ENCODE measurements at regions of chr1 and their contacts with region 1.

Region 1: DNA sequence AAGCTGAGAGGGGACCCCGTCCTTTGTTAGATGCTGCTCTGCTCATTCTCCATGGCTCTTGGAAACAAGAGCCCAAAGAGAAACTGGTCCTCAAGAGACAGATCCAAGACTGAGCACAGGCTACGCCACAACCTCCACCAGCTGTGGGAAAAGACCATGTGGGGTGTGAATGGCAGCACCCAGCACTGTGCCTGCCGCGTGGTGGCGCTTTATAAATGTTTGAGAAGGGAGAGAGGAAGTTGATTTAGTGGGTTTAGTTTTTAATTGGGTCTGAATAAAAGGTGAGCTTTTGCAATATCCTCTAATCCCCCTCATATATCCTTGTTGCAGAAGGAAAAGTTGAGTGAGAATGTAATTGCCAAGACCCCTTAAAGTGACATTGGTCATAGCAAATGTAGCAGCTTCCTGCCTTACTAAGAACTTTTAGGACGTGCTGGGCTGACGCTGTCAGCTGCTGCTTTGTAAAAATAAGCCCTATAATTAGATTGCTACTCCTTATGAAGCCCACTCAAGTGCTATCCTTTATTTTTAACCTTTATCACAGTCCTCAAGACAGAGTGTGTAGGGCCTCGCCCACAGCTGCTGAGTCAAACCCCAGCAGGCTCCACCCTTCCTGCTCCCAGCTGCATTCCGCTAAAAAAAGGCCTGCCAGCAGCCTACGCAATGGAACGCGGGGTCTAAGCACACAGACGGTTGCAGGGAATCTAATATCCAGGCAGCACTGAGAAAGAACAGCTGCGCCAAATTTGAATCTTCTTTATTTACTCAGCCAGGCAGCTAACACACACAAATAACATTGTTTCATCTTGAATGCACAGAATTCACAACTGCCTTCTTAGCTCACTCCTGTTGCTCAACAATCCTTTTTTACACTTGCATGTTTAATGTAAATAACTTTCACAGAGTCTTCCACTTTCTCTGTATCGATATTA is 47.4 kb upstream of the PRDX6 start:
- DNase-seq: peak; percentile 96
- ATAC-seq: peak; percentile 97
- H3K4me3 ChIP-seq: peak overlapping the region; percentile 21; the same call in 1 of the 2 replicates
- H3K27ac ChIP-seq: peak overlapping the region; percentile 74
- H3K4me1 ChIP-seq: peaks cover 5% of the 10 kb centered on the region; the same call in 1 of the 2 replicates
- H3K27me3 ChIP-seq: no peaks in the 10 kb centered on the region
- CTCF ChIP-seq: peak; percentile 58
- POLR2A ChIP-seq: no peak
- RAD21 ChIP-seq: peak; percentile 44

Region 2: GRCh38 chr1:173302890-173303829 is 126.6 kb before region 1 on chr1:
- CTCF ChIA-PET with region 1: no interaction called
- POLR2A ChIA-PET with region 1: no interaction called
- dilution Hi-C with region 1: no loop called
- in situ Hi-C with region 1: no loop called
- intact Hi-C with region 1: no loop called
- DNase-seq: no peak
- ATAC-seq: no peak
- H3K4me3 ChIP-seq: no peak overlapping the region
- H3K27ac ChIP-seq: no peak overlapping the region
- H3K4me1 ChIP-seq: no peaks in the 10 kb centered on the region
- H3K27me3 ChIP-seq: no peaks in the 10 kb centered on the region
- CTCF ChIP-seq: no peak
- POLR2A ChIP-seq: no peak
- RAD21 ChIP-seq: no peak

Region 3: DNA sequence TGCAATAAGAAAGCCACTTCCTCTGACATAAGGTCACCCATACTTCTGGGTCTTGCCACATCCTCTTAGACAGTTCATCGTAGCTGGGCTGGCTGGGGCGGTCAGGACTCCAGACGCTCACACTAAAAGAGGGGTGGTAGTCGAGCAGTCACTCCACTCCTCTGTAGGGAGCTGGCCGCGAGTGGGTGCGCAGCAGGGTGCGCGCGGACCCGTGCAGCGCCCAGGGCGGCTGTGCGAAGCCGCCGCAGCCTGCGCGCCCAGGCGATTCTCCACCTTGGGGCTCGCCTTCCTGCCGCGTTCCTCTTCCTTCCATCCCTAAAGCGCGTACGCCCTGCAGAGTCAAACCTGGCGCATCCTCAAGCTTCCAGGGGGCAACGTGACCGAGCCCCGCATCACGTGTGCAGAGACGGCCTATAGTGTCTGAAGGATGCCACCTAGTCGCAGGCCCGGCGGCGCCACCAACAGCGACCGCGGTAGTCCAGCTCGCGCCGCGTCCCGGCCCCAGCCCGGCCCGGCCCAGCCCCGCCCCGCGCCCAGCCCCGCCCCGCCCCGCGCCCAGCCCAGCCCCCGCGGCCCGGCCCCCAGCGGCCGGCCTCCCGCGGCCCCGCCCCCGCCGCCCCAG is 47.0 kb after region 1 on chr1:
- CTCF ChIA-PET with region 1: interaction called, 17 read pairs
- POLR2A ChIA-PET with region 1: interaction called, 3 read pairs
- dilution Hi-C with region 1: no loop called
- in situ Hi-C with region 1: no loop called
- intact Hi-C with region 1: loop called (anchors 1 kb)
- DNase-seq: peak; percentile 78
- ATAC-seq: peak; percentile 82
- H3K4me3 ChIP-seq: peak overlapping the region; percentile 95
- H3K27ac ChIP-seq: peak overlapping the region; percentile 79
- H3K4me1 ChIP-seq: peaks cover 16% of the 10 kb centered on the region
- H3K27me3 ChIP-seq: no peaks in the 10 kb centered on the region
- CTCF ChIP-seq: no peak
- POLR2A ChIP-seq: peak; percentile 37; the same call in 1 of the 2 replicates
- RAD21 ChIP-seq: no peak

Region 4: GRCh38 chr1:173768206-173768605 is 338.5 kb after region 1 on chr1:
- CTCF ChIA-PET with region 1: no interaction called
- POLR2A ChIA-PET with region 1: no interaction called
- dilution Hi-C with region 1: no loop called
- in situ Hi-C with region 1: no loop called
- intact Hi-C with region 1: loop called (anchors 5 kb)
- DNase-seq: no peak
- ATAC-seq: no peak
- H3K4me3 ChIP-seq: no peak overlapping the region
- H3K27ac ChIP-seq: no peak overlapping the region
- H3K4me1 ChIP-seq: no peaks in the 10 kb centered on the region
- H3K27me3 ChIP-seq: no peaks in the 10 kb centered on the region
- CTCF ChIP-seq: no peak
- POLR2A ChIP-seq: no peak
- RAD21 ChIP-seq: no peak

Region 5: DNA sequence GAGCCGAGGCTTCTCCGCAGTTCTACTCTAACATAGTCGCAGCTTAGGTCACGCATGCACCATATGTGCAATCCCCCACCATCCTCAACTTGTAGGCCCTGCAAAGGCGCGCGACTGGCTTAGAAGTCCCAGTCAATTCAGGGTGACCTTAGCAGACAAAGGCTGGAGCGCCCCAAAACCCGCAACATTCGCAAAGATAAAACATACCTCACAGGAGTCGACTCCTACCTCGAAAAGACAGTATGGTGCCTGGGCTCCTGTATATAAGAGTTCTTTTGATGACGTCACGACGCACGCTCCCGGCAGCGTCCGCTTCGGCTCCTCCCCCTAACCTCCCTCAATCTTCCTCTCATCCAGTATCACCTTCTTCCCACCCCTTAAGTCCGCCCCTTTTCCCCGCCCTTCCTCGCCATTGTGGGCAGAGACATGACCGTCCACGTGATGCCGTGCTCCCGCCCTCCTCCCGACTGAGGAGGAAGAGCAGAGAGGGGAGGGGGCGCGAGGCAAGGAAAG is 438.1 kb after region 1 on chr1 and contains the start of gene GAS5:
- CTCF ChIA-PET with region 1: no interaction called
- POLR2A ChIA-PET with region 1: no interaction called
- dilution Hi-C with region 1: no loop called
- in situ Hi-C with region 1: no loop called
- intact Hi-C with region 1: loop called (anchors 5 kb)
- DNase-seq: peak; percentile 100
- ATAC-seq: peak; percentile 92
- H3K4me3 ChIP-seq: peak within 1 kb of the TSS; percentile 70
- H3K27ac ChIP-seq: peak within 1 kb of the TSS; percentile 80
- H3K4me1 ChIP-seq: no peaks in the 10 kb centered on the region; the same call in 1 of the 2 replicates
- H3K27me3 ChIP-seq: no peaks in the 10 kb centered on the region
- CTCF ChIP-seq: no peak
- POLR2A ChIP-seq: peak; percentile 100
- RAD21 ChIP-seq: no peak
- total RNA-seq, gene GAS5: 380 and 450 TPM in 2 replicates

Region 6: DNA sequence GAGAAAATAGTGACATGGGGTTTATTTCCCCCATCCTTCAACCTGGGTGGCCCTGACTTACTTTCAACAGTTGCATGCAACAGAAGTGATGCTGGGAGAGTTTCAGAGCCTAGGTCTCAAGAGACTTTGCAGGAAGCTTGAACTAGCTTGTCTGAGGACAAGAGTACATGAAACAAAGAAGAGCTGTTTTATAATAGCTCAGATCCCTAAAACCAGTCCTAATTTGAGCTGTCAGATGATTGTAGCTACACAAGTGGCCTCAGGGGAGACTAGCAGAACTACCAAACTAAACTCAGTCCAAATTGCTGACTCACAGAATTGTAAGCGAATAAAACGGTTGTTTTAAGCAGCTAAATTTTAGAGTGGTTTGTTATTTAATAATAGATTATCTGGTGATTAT is 575.3 kb after region 1 on chr1:
- CTCF ChIA-PET with region 1: no interaction called
- POLR2A ChIA-PET with region 1: no interaction called
- dilution Hi-C with region 1: no loop called
- in situ Hi-C with region 1: no loop called
- intact Hi-C with region 1: no loop called
- DNase-seq: peak; percentile 34
- ATAC-seq: peak; percentile 47
- H3K4me3 ChIP-seq: no peak overlapping the region
- H3K27ac ChIP-seq: no peak overlapping the region
- H3K4me1 ChIP-seq: peaks cover 17% of the 10 kb centered on the region
- H3K27me3 ChIP-seq: no peaks in the 10 kb centered on the region
- CTCF ChIP-seq: no peak
- POLR2A ChIP-seq: no peak
- RAD21 ChIP-seq: no peak

Region 7: GRCh38 chr1:174074757-174075156 is 645.0 kb after region 1 on chr1:
- CTCF ChIA-PET with region 1: no interaction called
- POLR2A ChIA-PET with region 1: no interaction called
- dilution Hi-C with region 1: no loop called
- in situ Hi-C with region 1: no loop called
- intact Hi-C with region 1: loop called (anchors 5 kb)
- DNase-seq: peak; percentile 55
- ATAC-seq: peak; percentile 76
- H3K4me3 ChIP-seq: no peak overlapping the region
- H3K27ac ChIP-seq: no peak overlapping the region
- H3K4me1 ChIP-seq: no peaks in the 10 kb centered on the region
- H3K27me3 ChIP-seq: no peaks in the 10 kb centered on the region
- CTCF ChIP-seq: peak; percentile 64
- POLR2A ChIP-seq: no peak
- RAD21 ChIP-seq: peak; percentile 72